ENCODE measurements at regions of chr1 and their contacts with region 1.

Region 1: GRCh38 chr1:28736450-28737306 is at the start of gene YTHDF2:
- DNase-seq: peak; percentile 95
- H3K4me3 ChIP-seq: peak within 1 kb of the TSS; percentile 82 to 95 (median 92)
- H3K27ac ChIP-seq: peak within 1 kb of the TSS; percentile 85
- H3K4me1 ChIP-seq: peaks cover 29% of the 10 kb centered on the region
- H3K27me3 ChIP-seq: no peaks in the 10 kb centered on the region
- CTCF ChIP-seq: peak; percentile 95
- POLR2A ChIP-seq: peak; percentile 61
- total RNA-seq, gene YTHDF2: 101 and 105 TPM in 2 replicates

Region 2: GRCh38 chr1:28518000-28518744 is 218.5 kb before region 1 on chr1:
- CTCF ChIA-PET with region 1: no interaction called
- POLR2A ChIA-PET with region 1: no interaction called
- dilution Hi-C with region 1: no loop called
- intact Hi-C with region 1: loop called (anchors 5 kb)
- DNase-seq: peak; percentile 91
- H3K4me3 ChIP-seq: peak overlapping the region; percentile 52 to 73 (median 57)
- H3K27ac ChIP-seq: peak overlapping the region; percentile 46
- H3K4me1 ChIP-seq: peaks cover 14% of the 10 kb centered on the region
- H3K27me3 ChIP-seq: no peaks in the 10 kb centered on the region
- CTCF ChIP-seq: peak; percentile 94 to 98
- POLR2A ChIP-seq: peak; percentile 87

Region 3: DNA sequence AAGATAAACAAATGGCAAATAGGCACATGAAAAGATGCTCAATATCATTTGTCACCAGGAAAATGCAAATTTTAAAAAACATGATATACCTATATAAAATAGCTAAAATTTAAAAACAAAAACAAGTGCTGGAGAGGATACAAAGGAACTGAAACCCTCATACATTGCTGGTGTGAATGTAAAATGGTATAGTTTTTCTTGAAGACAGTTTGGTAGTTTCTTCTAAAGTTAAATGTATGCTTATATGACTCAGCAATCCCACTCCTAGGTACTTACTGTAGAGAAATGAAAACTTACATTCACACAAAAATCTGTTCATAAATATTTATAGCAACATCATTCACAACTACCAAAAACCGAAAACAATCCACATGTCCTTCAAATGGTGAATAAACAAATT is 105.0 kb before region 1 on chr1:
- CTCF ChIA-PET with region 1: no interaction called
- POLR2A ChIA-PET with region 1: no interaction called
- dilution Hi-C with region 1: no loop called
- intact Hi-C with region 1: no loop called
- DNase-seq: no peak
- H3K4me3 ChIP-seq: no peak overlapping the region
- H3K27ac ChIP-seq: no peak overlapping the region
- H3K4me1 ChIP-seq: no peaks in the 10 kb centered on the region
- H3K27me3 ChIP-seq: no peaks in the 10 kb centered on the region
- CTCF ChIP-seq: no peak
- POLR2A ChIP-seq: no peak

Region 4: GRCh38 chr1:28648474-28649198 is 88.0 kb before region 1 on chr1 and contains the start of gene RNU11:
- CTCF ChIA-PET with region 1: interaction called, 14 read pairs
- POLR2A ChIA-PET with region 1: interaction called, 23 read pairs
- dilution Hi-C with region 1: no loop called
- intact Hi-C with region 1: loop called (anchors 1 kb)
- DNase-seq: peak; percentile 97
- H3K4me3 ChIP-seq: peak within 1 kb of the TSS in 2 of 3 experiments; percentile 18 to 20
- H3K27ac ChIP-seq: peak within 1 kb of the TSS; percentile 97
- H3K4me1 ChIP-seq: peaks cover 10% of the 10 kb centered on the region
- H3K27me3 ChIP-seq: no peaks in the 10 kb centered on the region
- CTCF ChIP-seq: no peak
- POLR2A ChIP-seq: peak; percentile 100
- total RNA-seq, gene RNU11: not detected in 2 replicates

Region 5: GRCh38 chr1:28718586-28719331 is 17.9 kb before region 1 on chr1:
- CTCF ChIA-PET with region 1: interaction called, 11 read pairs
- POLR2A ChIA-PET with region 1: no interaction called
- dilution Hi-C with region 1: no loop called
- intact Hi-C with region 1: no loop called
- DNase-seq: peak; percentile 10
- H3K4me3 ChIP-seq: no peak overlapping the region
- H3K27ac ChIP-seq: no peak overlapping the region
- H3K4me1 ChIP-seq: no peaks in the 10 kb centered on the region
- H3K27me3 ChIP-seq: no peaks in the 10 kb centered on the region
- CTCF ChIP-seq: no peak
- POLR2A ChIP-seq: no peak

Region 6: GRCh38 chr1:28756846-28757245 is 20.2 kb after region 1 on chr1:
- CTCF ChIA-PET with region 1: interaction called, 32 read pairs
- POLR2A ChIA-PET with region 1: interaction called, 8 read pairs
- dilution Hi-C with region 1: no loop called
- intact Hi-C with region 1: no loop called
- DNase-seq: peak; percentile 28
- H3K4me3 ChIP-seq: no peak overlapping the region
- H3K27ac ChIP-seq: no peak overlapping the region
- H3K4me1 ChIP-seq: peaks cover 1% of the 10 kb centered on the region
- H3K27me3 ChIP-seq: no peaks in the 10 kb centered on the region
- CTCF ChIP-seq: no peak
- POLR2A ChIP-seq: no peak

Region 7: DNA sequence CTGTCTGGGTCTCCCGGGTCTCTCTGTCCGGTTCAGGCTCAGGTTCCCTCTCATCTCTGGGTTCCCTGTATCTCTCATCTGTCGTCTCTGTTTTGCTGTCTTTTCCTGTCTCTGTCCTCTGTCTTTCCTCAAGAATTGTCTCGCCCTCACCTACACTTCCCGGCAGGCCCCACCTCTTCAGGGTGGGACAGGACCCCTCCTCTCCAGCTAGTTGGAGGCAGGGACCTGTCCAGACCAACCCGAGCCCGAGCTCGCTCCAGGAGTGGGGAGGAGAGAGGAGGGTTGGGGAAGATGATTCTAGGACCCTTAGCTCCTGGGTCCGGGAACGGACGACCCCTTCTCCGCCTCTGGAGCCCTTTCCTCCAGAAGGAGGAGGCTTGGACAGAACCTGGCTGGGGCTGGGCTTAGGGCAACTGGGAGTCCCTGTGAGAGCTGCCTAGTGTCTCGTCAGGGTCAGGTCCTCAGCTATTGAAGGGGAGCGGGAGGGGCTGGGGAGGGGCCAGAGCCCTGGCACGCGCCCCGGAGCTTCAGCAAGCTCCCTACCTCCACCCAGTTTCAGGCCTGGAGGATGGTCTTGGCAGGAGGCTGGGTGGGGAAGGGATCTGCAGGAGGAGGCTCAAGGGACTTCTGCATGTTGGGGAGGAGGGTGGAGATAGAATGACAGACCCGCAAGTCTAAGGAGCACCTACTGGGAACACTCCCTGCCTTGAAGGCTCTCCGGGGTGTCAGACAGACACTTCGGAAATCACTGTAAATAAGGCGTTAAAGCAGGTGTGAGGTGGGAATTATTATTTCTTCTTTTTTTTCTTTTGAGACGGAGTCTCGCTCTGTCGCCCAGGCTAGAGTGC is 151.4 kb after region 1 on chr1:
- CTCF ChIA-PET with region 1: no interaction called
- POLR2A ChIA-PET with region 1: no interaction called
- dilution Hi-C with region 1: no loop called
- intact Hi-C with region 1: no loop called
- DNase-seq: peak; percentile 44
- H3K4me3 ChIP-seq: peak overlapping the region; percentile 68 to 92 (median 84)
- H3K27ac ChIP-seq: peak overlapping the region; percentile 30
- H3K4me1 ChIP-seq: peaks cover 28% of the 10 kb centered on the region
- H3K27me3 ChIP-seq: no peaks in the 10 kb centered on the region
- CTCF ChIP-seq: no peak
- POLR2A ChIP-seq: no peak

Region 8: GRCh38 chr1:29210278-29211085 is 473.8 kb after region 1 on chr1:
- CTCF ChIA-PET with region 1: no interaction called
- POLR2A ChIA-PET with region 1: no interaction called
- dilution Hi-C with region 1: no loop called
- intact Hi-C with region 1: no loop called
- DNase-seq: peak; percentile 55
- H3K4me3 ChIP-seq: no peak overlapping the region
- H3K27ac ChIP-seq: no peak overlapping the region
- H3K4me1 ChIP-seq: peaks cover 6% of the 10 kb centered on the region
- H3K27me3 ChIP-seq: no peaks in the 10 kb centered on the region
- CTCF ChIP-seq: no peak
- POLR2A ChIP-seq: no peak